Thyroid gland (tissue), 4 donors: ENCODE measurements at regions of chr14 and their contacts with region 1.

Region 1: GRCh38 chr14:74612350-74613021 is 449 bp upstream of the LTBP2 start:
- DNase-seq: peak; percentile 86 to 89
- H3K4me3 ChIP-seq: peak overlapping the region; percentile 49 to 85 (median 53)
- H3K27ac ChIP-seq: peak overlapping the region; percentile 54 to 80 (median 67)
- H3K4me1 ChIP-seq: peaks cover 22 to 49% of the 10 kb centered on the region in 2 donors
- H3K27me3 ChIP-seq: no peaks in the 10 kb centered on the region
- CTCF ChIP-seq: peak; percentile 16 to 99 (median 70)
- POLR2A ChIP-seq: peak in 1 of 2 donors; percentile 54

Region 2: DNA sequence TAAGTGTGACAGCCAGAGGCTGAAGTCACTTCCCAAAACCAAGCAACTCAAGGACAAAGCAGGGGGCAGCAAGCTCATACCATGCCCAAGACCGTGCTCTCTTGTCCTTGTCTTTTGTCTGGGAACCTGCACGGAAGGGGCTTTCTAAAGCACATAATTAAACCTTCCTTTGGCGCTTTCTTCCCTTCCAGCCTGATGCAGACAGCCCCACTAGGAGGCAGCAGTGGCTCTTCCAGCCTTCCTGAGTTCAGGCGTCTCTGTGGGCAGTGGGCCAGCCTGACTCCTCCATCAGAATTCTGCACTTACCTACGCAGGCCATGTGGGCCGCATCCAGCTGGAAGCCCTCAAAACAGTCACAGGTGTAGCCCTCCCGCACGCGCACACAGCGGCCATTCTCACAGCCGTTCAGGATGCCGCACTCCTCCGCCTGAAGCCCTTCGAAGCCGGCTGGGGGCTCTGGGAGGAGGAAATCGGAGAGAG is 111.3 kb before region 1 on chr14:
- intact Hi-C with region 1: loop called (anchors 2 kb)
- DNase-seq: peak; percentile 95 to 97
- H3K4me3 ChIP-seq: no peak overlapping the region
- H3K27ac ChIP-seq: peak overlapping the region; percentile 30 to 63 (median 54)
- H3K4me1 ChIP-seq: peaks cover 7 to 9% of the 10 kb centered on the region in 2 donors
- H3K27me3 ChIP-seq: no peaks in the 10 kb centered on the region
- CTCF ChIP-seq: peak; percentile 58 to 94 (median 84)
- POLR2A ChIP-seq: peak in 1 of 2 donors; percentile 38

Region 3: DNA sequence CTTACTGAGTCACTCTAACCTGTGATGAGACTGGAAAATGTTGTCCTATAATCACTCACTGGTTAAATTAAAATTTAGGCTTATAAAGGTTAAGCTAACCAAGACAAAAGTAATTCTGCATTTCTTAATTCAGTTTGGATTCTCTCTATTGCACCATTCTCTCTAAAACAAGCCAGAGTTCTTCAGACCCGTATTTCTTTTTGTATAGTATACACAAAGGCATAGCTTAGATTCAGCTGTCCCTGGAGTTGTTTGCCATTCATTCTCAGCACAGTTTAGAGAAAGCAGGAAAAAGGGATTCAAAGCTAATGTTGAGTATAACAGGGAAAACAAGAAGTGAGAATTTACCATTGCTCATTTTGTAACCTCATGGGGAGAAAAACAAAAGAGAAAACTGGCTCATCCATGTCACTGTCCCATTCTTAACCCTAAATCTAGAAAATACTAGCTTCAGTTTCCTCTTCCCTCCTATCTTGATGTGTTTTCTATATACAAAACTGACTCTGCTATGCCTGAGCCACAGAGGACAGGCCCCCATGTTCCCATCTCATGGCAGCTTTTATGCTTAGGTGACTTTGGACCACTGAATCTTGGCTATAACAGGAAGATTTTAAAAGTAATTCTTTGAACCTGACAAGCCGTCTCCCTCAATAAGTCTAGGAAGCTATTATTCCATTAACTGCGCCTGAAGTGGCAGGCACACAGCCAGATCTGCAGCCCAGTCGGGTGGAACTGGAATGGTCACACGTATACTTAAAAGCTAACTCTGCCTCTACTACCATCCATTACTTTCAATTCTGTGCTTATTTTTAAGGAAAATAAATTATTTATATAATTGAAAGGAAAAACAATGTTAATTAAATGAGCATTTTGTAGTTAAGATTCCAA is 93.4 kb after region 1 on chr14:
- intact Hi-C with region 1: loop called (anchors 10 kb)
- DNase-seq: peak; percentile 91 to 94
- H3K4me3 ChIP-seq: no peak overlapping the region
- H3K27ac ChIP-seq: peak overlapping the region; percentile 66 to 83 (median 81)
- H3K4me1 ChIP-seq: peaks cover 47 to 59% of the 10 kb centered on the region in 2 donors
- H3K27me3 ChIP-seq: no peaks in the 10 kb centered on the region
- CTCF ChIP-seq: no peak
- POLR2A ChIP-seq: no peak

Region 4: DNA sequence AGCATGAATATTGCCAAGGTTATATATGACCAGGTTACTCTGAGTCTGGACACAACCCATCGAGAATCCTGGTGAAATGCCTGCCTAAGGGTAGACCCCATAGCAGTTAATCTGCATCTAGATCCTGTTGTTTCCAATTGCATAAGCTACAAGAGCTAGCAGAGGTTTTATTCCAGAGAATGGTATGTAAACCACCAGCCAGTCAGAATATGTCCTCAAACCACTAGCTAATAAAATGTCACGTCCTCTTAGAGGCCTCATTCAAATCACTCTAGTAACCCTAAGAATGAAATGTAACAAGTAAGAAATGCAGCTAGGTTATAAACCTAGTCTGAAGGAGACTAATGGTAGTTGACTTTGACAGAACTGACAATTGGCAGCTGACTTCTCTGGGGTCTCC is 141.7 kb after region 1 on chr14:
- intact Hi-C with region 1: no loop called
- DNase-seq: no peak
- H3K4me3 ChIP-seq: no peak overlapping the region
- H3K27ac ChIP-seq: no peak overlapping the region
- H3K4me1 ChIP-seq: no peaks in the 10 kb centered on the region
- H3K27me3 ChIP-seq: no peaks in the 10 kb centered on the region
- CTCF ChIP-seq: no peak
- POLR2A ChIP-seq: no peak

Region 5: GRCh38 chr14:74804219-74804826 is 191.8 kb after region 1 on chr14:
- intact Hi-C with region 1: loop called (anchors 10 kb)
- DNase-seq: peak; percentile 25 to 58
- H3K4me3 ChIP-seq: no peak overlapping the region
- H3K27ac ChIP-seq: no peak overlapping the region
- H3K4me1 ChIP-seq: no peaks in the 10 kb centered on the region
- H3K27me3 ChIP-seq: no peaks in the 10 kb centered on the region
- CTCF ChIP-seq: peak in 5 of 6 experiments; percentile 22 to 79 (median 49)
- POLR2A ChIP-seq: no peak